Right cardiac atrium (tissue), 5 donors: ENCODE measurements at regions of chr5 and their contacts with region 1.

Region 1: DNA sequence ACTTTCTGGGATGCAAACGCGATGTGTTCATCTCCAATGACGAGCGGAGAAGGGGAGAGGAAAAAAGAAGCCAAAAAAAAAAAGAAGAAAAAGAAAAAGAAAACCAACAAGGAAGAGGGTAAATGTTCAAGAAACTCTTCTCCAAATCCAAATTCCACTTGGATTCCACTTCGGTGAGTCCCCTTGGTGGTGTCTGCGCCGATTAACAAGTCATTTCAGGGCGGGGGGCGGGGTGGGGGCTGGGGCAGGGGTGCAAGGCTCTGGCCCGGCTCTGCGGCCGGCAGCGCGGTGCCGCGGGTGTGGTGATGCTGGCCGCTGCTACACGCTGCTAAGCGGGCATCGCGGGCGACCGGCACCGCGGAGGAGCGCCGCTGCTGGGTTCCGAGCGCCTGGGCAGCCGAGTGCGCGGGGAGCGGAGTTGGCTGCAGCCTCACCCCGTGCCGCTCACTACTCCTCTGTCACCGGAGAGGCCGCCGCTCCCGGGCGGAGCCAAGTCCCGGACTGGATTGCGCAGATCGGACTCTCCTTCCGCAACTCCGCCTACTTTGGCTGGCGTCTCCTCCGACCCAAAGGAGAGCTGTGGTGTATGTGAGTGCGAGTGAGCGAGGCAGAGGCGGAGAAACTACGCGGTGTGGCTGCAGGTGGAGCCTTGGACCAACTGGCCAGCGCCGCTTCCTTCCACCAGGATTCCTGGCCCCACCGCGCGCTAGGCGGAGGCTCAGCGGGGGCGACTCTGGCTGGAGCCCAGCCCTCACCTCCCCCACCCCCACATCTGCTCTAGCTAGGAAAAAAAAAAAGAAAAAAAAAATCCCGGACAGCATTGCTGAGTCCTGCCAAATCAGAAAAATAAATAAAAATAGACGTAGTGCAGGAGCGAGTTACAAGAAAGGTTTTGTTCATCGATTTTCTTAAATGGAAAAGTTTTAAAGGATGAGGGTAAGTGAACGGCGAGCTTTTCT is at the start of gene SEMA6A:
- DNase-seq: peak; percentile 91 to 96 (median 96)
- ATAC-seq: peak; percentile 92
- H3K4me3 ChIP-seq: peak within 1 kb of the TSS; percentile 83
- H3K27ac ChIP-seq: peak within 1 kb of the TSS; percentile 30
- H3K4me1 ChIP-seq: no peaks in the 10 kb centered on the region
- H3K27me3 ChIP-seq: no peaks in the 10 kb centered on the region
- total RNA-seq, gene SEMA6A: 4.0 to 9.4 (median 4.4) TPM

Region 2: GRCh38 chr5:116365006-116365496 is 209.6 kb before region 1 on chr5:
- intact Hi-C with region 1: no loop called
- DNase-seq: no peak
- ATAC-seq: no peak
- H3K4me3 ChIP-seq: no peak overlapping the region
- H3K27ac ChIP-seq: no peak overlapping the region
- H3K4me1 ChIP-seq: peaks cover 3% of the 10 kb centered on the region
- H3K27me3 ChIP-seq: no peaks in the 10 kb centered on the region

Region 3: GRCh38 chr5:116788851-116789403 is 214.3 kb after region 1 on chr5:
- intact Hi-C with region 1: loop called in 1 of 4 experiments (anchors 10 kb)
- DNase-seq: no peak
- ATAC-seq: peak; percentile 70 to 79
- H3K4me3 ChIP-seq: no peak overlapping the region
- H3K27ac ChIP-seq: no peak overlapping the region
- H3K4me1 ChIP-seq: no peaks in the 10 kb centered on the region
- H3K27me3 ChIP-seq: no peaks in the 10 kb centered on the region

Region 4: GRCh38 chr5:117604845-117605244 is 1030.2 kb after region 1 on chr5:
- intact Hi-C with region 1: no loop called
- DNase-seq: no peak
- ATAC-seq: no peak
- H3K4me3 ChIP-seq: no peak overlapping the region
- H3K27ac ChIP-seq: no peak overlapping the region
- H3K4me1 ChIP-seq: no peaks in the 10 kb centered on the region
- H3K27me3 ChIP-seq: no peaks in the 10 kb centered on the region